Aorta (tissue), 5 donors: ENCODE measurements at regions of chr7 and their contacts with region 1.

Region 1: DNA sequence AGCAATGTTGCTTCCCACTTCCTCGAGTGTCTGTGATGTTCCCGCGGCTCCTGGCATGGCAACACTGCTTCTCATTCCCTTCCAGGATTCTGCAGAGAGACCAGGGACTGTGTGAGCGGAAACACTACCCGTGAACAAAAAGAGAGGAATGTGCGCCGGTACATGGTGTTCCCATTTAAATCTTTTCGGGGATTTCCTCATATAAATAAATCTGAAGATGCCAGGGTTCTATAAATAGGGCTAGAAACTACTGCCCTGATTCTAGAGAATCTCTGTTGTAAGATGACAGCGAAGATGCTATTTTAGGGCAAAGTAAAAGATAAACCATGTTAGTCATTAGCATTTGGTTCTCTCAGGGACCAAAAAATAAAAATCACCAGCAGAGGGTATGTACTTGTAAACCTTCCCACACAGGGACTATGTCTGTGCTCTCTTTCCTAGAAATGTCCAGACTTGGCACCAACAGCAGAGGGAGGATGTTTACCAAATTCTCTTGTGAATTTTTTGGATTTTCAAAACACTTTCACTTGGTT is 92.2 kb upstream of the DDC start:
- DNase-seq: peak; percentile 73 to 88
- ATAC-seq: peak; percentile 76
- H3K4me3 ChIP-seq: no peak overlapping the region
- H3K27ac ChIP-seq: peak overlapping the region in 1 of 2 donors; percentile 65
- H3K4me1 ChIP-seq: peaks cover 7 to 9% of the 10 kb centered on the region in 2 donors
- H3K27me3 ChIP-seq: no peaks in the 10 kb centered on the region

Region 2: GRCh38 chr7:50577569-50577968 is 79.8 kb before region 1 on chr7:
- intact Hi-C with region 1: no loop called
- DNase-seq: no peak
- ATAC-seq: no peak
- H3K4me3 ChIP-seq: no peak overlapping the region
- H3K27ac ChIP-seq: no peak overlapping the region
- H3K4me1 ChIP-seq: no peaks in the 10 kb centered on the region
- H3K27me3 ChIP-seq: no peaks in the 10 kb centered on the region

Region 3: DNA sequence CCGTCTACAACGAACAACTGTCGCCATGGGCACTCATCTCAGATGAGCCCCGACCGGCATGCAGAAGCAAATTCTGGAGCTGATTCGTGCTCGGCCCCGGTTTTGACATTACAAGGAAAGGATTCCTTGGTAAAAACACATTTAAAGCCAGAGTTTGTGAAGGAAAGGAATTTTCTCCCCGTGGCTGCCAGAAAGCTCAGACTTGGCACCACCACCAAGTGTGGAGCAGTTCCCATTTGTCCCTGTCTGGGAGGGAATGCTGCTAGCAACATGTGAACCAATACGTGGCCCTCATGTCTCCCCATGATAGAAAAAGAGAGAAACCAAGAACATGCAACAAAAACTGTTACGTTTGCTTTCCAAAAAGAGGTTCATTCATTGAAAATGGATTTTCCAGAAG is 37.0 kb before region 1 on chr7:
- intact Hi-C with region 1: loop called in 1 of 2 experiments (anchors 5 kb)
- DNase-seq: peak in 1 of 2 donors; percentile 69
- ATAC-seq: peak; percentile 47
- H3K4me3 ChIP-seq: no peak overlapping the region
- H3K27ac ChIP-seq: peak overlapping the region in 1 of 2 donors; percentile 41
- H3K4me1 ChIP-seq: peaks cover 2 to 3% of the 10 kb centered on the region in 2 donors
- H3K27me3 ChIP-seq: no peaks in the 10 kb centered on the region

Region 4: GRCh38 chr7:50714839-50715238 is 57.4 kb after region 1 on chr7:
- intact Hi-C with region 1: loop called in 1 of 2 experiments (anchors 5 kb)
- DNase-seq: no peak
- ATAC-seq: no peak
- H3K4me3 ChIP-seq: no peak overlapping the region
- H3K27ac ChIP-seq: peak overlapping the region in 1 of 2 donors; percentile 14
- H3K4me1 ChIP-seq: peaks cover 4 to 12% of the 10 kb centered on the region in 2 donors
- H3K27me3 ChIP-seq: no peaks in the 10 kb centered on the region

Region 5: DNA sequence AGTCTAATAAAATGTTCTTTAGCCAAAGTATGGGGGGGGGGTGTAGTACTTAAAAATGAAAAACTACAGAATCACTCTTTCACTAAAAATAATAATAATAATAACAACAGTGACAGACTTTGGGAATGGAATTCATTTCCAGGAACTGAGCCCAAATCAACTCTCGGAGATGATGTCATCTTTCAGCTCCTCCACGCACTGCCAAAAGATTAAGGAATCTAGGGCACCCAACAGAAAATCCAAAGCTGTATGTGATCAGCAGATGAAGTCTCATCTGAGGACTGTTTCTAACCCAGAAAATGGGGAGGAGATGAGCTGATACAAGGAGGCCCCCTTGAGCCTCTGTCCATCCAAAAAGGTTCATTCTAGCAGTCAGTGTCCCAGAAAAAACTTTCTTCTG is 70.8 kb after region 1 on chr7:
- intact Hi-C with region 1: loop called in 1 of 2 experiments (anchors 5 kb)
- DNase-seq: no peak
- ATAC-seq: peak; percentile 61
- H3K4me3 ChIP-seq: no peak overlapping the region
- H3K27ac ChIP-seq: peak overlapping the region in 1 of 2 donors; percentile 81
- H3K4me1 ChIP-seq: peaks cover 9% of the 10 kb centered on the region in 2 donors
- H3K27me3 ChIP-seq: no peaks in the 10 kb centered on the region